ENCODE measurements at regions of chr19 and their contacts with region 1.

Region 1: DNA sequence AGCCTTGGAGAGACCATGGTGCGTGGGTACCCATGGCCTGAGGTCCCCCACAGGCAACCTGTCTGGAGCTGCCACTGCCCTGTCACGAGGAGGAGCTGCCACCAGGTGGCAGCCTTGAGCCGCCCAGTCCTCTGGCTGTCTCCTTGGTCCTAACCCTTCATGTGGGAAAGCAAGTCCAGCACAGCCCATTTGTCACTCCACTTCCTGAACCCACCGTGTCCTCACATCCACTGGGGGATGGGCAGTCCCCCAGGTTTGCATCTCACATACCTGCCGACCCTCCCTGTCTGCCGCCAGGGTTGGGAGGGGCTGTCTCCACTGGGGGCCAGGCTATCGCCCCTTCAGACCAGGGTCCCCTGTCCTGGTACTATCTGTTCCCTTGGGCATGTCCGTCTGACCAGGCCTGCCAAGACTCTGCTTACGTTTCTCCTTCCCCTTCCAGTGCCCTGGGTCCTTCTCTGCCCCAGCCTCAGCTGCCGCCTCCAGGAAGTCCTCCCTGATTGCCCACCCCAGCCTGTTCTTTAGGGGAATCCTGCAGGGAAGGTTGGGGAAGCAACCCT is 4.5 kb downstream of the FAM174C start:
- DNase-seq: peak; percentile 88

Region 2: GRCh38 chr19:1232652-1233072 is 47.2 kb before region 1 on chr19:
- in situ Hi-C with region 1: no loop called
- DNase-seq: no peak

Region 3: GRCh38 chr19:1373534-1374249 is 93.8 kb after region 1 on chr19:
- in situ Hi-C with region 1: loop called (anchors 10 kb)
- DNase-seq: peak; percentile 59

Measured in G401 (cell line).